Upper lobe of right lung (tissue), 1 donor: ENCODE measurements at regions of chr1 and their contacts with region 1.

Region 1: DNA sequence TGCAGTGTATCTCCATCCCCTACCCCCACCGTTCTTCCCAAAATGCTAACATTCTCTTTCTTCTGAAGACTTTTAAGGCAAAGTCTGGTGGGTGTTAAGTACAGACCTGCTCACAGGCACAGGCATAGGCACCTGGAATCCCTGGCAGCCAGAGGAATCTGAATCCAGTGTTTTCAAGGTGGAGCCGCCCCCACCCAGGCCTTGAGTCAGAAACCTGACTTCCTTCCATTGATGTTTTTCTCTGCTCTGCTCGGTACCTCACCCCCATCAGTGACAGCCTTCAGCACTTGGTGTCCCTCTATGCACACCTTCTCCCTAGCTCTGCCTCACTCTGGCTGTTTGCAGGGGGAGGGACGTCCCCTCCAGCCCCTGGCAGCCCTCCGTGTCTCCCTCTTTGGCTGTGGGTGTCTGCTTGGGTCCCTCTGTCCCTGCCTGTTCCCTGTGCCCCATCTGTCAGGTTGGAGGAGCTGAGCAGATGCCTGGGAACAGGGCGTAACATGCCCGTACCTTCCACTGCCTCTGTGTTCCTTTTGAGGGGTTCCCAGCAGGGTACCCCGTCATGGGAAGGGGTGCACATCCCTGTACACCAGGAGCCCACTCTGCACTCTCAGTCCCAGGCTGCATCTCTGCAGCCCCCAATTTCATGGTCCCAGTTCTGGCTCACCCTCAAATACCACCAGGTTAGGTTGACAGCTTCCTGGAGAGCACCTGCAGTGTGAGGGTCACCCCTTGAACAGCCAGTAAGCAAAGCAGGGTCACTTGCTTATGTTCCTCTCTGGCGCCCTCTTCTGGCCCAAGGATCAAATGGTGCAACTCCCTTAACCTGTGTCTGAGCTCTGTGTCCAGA is 6.7 kb downstream of the NCDN start:
- DNase-seq: peak; percentile 79
- ATAC-seq: peak; percentile 77
- H3K4me3 ChIP-seq: no peak overlapping the region
- H3K27ac ChIP-seq: no peak overlapping the region
- H3K4me1 ChIP-seq: peaks cover 3% of the 10 kb centered on the region
- H3K27me3 ChIP-seq: no peaks in the 10 kb centered on the region
- CTCF ChIP-seq: peak; percentile 81

Region 2: DNA sequence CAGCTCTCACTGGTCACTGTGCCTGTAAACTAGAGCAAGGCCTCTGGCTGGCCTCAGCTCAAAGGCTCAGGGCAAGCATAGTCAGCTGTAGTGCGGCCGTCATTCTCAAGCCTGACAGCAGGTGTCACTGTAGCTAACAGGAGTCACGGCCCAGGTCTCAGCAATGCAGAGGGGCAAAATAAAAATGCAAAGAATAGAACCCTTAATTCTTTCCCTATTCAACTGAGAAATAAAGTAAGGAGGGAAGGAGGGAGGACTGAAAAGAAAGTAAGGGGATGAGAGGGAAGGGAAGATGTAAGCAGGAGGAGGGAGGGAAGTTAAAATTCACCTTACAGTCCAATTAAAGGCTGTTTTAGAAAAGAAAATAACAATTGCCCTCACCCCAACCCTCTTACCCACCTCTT is 113.1 kb before region 1 on chr1:
- intact Hi-C with region 1: loop called (anchors 5 kb)
- DNase-seq: peak; percentile 87
- ATAC-seq: peak; percentile 88
- H3K4me3 ChIP-seq: no peak overlapping the region
- H3K27ac ChIP-seq: no peak overlapping the region
- H3K4me1 ChIP-seq: peaks cover 53% of the 10 kb centered on the region
- H3K27me3 ChIP-seq: no peaks in the 10 kb centered on the region
- CTCF ChIP-seq: peak; percentile 88

Region 3: GRCh38 chr1:35486858-35487408 is 77.3 kb before region 1 on chr1:
- intact Hi-C with region 1: no loop called
- DNase-seq: no peak
- ATAC-seq: no peak
- H3K4me3 ChIP-seq: no peak overlapping the region
- H3K27ac ChIP-seq: no peak overlapping the region
- H3K4me1 ChIP-seq: no peaks in the 10 kb centered on the region
- H3K27me3 ChIP-seq: no peaks in the 10 kb centered on the region
- CTCF ChIP-seq: no peak

Region 4: DNA sequence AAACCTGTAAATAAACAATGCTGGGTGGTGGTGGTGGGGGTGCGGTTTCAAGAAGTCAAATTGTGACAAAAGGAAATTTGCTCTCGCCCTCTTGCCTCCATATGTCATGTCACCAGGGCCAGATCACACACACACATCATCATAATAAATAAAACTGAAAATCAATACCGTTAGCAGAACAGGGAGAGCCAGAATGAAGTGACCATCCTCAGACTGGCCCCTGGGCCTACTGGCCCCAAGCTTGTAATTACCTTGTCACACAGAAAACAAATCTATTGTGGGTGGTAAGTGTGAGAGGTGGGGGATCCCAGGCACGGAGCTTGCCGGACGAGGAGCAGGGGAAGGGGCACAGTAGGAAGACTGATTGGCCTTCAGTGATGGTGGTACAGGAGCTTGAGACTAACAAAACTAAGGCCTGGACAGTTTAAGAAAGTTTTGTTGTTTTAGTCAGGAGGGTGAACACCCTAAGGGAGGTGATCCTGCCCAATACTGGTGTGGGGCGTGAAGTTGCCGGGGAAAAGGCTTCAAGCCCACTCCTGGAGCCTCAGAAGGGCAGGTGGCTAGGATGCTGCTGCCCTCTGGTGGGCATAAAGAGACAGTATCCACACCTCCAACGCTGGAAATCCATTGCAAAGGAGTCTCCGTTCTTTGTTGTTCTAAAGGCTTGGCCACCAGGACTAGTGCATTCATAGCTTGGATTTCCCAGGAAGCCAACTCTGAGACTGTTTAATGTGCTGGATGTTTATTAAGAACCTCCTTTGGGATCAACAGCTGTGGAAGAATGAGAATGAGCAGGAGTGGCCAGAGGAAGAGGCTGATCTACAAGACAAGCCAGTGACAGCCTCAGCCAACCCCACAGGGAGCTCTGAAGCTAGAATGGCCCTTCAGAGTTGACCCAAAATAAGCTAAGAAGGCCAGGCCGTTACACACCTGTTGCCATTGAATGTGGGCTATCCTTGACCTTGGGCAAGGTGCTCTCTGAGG is 162.5 kb after region 1 on chr1:
- intact Hi-C with region 1: loop called (anchors 10 kb)
- DNase-seq: no peak
- ATAC-seq: peak; percentile 94
- H3K4me3 ChIP-seq: no peak overlapping the region
- H3K27ac ChIP-seq: no peak overlapping the region
- H3K4me1 ChIP-seq: no peaks in the 10 kb centered on the region
- H3K27me3 ChIP-seq: no peaks in the 10 kb centered on the region
- CTCF ChIP-seq: peak; percentile 89